GM10248 (cell line): ENCODE measurements at regions of chr3 and their contacts with region 1.

Region 1: DNA sequence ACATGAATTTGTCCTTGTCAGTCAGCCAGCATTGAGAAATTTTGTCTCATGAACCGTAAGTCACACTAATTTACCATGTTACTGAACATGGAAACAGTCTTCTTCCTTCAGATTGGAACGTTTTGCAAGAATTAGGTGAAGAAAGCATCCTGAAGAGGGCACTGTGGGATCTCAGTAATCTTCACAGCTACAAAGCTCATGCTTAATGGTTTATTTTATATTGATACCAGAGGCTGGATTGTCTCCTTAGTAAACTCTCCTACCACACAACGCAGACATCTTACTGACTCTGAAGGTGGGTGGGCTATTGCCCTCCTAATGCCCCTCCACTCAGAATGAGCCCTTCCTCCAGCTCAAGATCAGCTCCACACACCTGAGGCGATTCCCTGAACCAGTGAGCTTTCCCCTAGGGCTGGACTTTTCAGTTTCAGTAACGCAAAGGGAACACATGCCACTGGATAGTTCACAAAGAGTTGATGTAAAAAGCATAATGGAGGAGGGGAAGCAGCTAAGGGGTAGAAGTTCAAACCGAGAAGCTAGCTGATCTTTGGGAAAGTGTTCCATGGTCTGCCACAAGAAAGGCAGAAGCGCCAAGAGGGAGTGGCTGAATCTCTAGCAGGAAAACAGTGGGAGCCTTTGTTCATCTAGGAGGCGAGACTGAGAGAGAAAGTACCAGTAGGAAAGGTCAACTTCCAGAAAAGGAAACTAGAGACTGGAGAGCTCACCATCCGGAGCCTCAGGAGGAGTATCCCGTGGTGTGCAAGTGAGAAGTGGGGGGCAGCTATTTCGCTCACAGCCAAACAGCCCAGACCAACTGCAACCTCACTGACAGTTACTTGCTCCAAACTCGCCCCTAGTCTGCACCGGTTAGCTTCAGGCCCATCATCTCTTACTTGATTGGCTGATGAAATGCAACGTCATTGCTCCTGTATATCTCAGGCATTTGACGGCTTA is at the start of gene SLC9C1:
- DNase-seq: peak; percentile 53
- CTCF ChIP-seq: peak; percentile 54

Region 2: DNA sequence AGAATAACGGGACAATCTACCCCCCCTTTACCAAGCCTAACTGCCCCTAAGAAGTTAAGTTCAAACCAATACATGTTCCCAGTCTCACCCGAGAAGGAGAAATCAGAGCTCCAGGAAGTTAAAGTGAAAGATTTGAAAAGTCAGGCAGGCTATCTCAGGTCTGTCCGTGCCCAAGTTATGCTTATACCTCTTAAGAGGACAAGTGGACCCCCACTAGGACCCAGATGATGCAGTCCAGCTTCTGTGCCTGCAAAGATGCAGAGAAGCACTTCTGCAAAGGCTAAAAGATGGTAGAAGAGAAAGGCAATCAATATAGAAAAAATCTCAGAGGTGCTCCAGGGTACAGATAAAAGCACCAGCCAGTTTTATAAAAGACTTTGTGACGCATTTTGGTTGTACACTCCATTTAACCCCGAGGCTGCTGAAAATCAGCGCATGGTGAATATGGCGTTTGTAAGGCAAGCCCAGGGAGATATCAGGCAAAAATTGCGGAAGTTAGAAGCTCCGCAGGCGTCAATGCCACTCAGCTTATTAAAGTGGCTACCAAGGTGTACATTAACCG is 10.2 kb after region 1 on chr3:
- CTCF ChIA-PET with region 1: interaction called, 51 read pairs
- POLR2A ChIA-PET with region 1: no interaction called
- DNase-seq: no peak
- CTCF ChIP-seq: no peak

Region 3: DNA sequence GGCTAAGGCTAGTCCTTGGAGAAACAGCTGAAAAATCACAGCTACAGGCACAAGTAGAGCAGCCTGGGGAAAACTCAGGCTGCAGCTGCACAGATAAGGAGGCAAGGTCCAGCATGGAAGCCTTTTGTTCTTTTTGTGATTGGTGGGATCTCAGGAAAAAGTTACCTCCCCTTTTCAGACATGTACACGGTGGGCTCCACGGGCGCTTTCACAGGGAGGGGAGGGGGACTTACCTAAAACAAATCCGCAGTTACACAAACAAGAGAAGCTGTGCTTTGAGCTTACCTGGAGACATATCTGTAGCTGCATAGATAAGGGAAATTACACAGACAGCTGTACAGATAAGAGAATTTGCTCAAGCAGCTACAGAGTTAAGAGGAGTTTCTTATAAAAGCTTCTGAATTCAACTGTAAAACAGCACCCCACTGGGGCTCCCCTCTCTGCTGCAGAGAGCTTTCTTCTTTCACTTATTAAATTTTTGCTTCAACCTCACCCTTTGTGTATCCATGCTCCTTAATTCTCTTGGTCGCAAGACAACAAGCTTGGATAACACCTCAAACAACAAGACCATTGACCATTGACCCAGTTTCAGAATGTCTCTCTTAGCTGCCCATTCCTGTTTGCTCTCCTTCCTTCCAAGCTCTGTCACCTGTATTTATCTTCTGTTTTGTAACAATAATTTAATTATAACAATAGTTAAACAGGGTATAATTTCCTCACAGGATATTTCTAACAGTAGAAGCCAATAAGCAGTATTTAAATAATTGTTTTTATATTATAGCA is 28.4 kb after region 1 on chr3:
- CTCF ChIA-PET with region 1: interaction called, 13 read pairs
- POLR2A ChIA-PET with region 1: no interaction called
- DNase-seq: no peak
- CTCF ChIP-seq: no peak

Region 4: DNA sequence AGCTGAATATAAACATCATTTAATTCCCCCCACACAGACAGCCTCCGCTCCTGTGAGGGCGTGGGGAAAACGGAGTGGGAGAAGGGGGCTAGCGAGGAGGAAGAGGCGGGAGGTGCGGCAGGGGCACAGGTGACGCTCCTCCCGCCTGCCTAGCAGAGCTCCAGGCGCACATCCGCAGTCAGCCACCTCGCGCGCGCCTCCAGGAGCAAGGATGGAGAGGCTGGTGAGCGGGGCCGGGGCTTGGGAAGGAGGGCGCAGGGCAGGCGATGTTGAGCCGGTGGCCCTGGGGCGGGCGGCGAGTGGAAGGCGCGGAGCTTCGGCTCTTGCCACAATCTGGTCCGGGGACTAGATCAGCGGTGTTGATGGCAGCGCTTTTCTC is 39.3 kb after region 1 on chr3 and contains the start of gene CD200:
- CTCF ChIA-PET with region 1: interaction called, 14 read pairs
- POLR2A ChIA-PET with region 1: no interaction called
- DNase-seq: peak; percentile 55
- CTCF ChIP-seq: no peak

Region 5: GRCh38 chr3:112519424-112520001 is 225.9 kb after region 1 on chr3:
- CTCF ChIA-PET with region 1: interaction called, 16 read pairs
- POLR2A ChIA-PET with region 1: no interaction called
- DNase-seq: peak; percentile 59
- CTCF ChIP-seq: peak; percentile 62

Region 6: GRCh38 chr3:112531358-112531781 is 237.7 kb after region 1 on chr3:
- CTCF ChIA-PET with region 1: interaction called, 10 read pairs
- POLR2A ChIA-PET with region 1: no interaction called
- DNase-seq: peak; percentile 26
- CTCF ChIP-seq: peak; percentile 27